ENCODE measurements at regions of chr18 and their contacts with region 1.

Region 1: GRCh38 chr18:62425465-62426195 is 97.2 kb upstream of the ZCCHC2 start:
- DNase-seq: peak; percentile 15 to 56 (median 51)
- H3K4me3 ChIP-seq: no peak overlapping the region
- H3K4me3 Mint-ChIP-seq: no peak overlapping the region
- H3K27ac ChIP-seq: no peak overlapping the region
- H3K27ac Mint-ChIP-seq: peak overlapping the region in 1 of 8 donors; percentile 10
- H3K4me1 ChIP-seq: peaks cover 10% of the 10 kb centered on the region
- H3K4me1 Mint-ChIP-seq: peaks cover 11 to 18% (median 17%) of the 10 kb centered on the region in 3 donors
- H3K27me3 ChIP-seq: no peaks in the 10 kb centered on the region
- H3K27me3 Mint-ChIP-seq: peaks cover 4 to 12% of the 10 kb centered on the region in 2 donors

Region 2: GRCh38 chr18:62379051-62379450 is 46.6 kb before region 1 on chr18:
- CTCF ChIA-PET with region 1: no interaction called
- POLR2A ChIA-PET with region 1: no interaction called
- DNase-seq: no peak
- H3K4me3 ChIP-seq: no peak overlapping the region
- H3K4me3 Mint-ChIP-seq: no peak overlapping the region
- H3K27ac ChIP-seq: no peak overlapping the region
- H3K27ac Mint-ChIP-seq: no peak overlapping the region
- H3K4me1 ChIP-seq: no peaks in the 10 kb centered on the region
- H3K4me1 Mint-ChIP-seq: no peaks in the 10 kb centered on the region
- H3K27me3 ChIP-seq: no peaks in the 10 kb centered on the region
- H3K27me3 Mint-ChIP-seq: peaks cover 6 to 9% of the 10 kb centered on the region in 2 donors

Region 3: DNA sequence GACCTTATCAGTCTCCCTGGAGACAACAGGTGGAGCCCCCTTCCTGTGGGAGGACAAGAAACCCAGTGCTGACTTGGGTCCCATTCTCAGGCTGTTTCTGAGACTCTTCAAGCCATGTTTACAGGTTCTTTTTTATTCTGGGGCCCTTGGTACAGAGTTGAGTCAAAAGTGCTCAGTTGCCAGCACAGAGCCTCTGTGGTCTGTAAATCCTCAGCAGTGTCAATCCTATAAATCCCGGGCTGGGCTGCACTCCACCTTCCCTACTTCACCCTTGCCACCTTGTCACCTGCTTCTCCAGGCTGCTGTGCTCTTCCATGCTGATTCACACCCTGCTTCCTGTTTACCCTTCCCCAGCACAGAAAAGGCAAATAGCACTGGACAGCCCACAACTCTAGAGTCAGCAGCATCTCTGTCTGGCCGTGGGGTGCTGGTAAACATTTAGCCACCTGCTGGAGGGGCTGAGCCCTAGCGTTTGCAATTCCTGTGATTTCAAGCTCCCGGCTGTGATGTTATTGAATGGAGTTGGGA is 25.8 kb before region 1 on chr18:
- CTCF ChIA-PET with region 1: no interaction called
- POLR2A ChIA-PET with region 1: no interaction called
- DNase-seq: no peak
- H3K4me3 ChIP-seq: no peak overlapping the region
- H3K4me3 Mint-ChIP-seq: no peak overlapping the region
- H3K27ac ChIP-seq: no peak overlapping the region
- H3K27ac Mint-ChIP-seq: peak overlapping the region in 1 of 8 donors; percentile 20
- H3K4me1 ChIP-seq: no peaks in the 10 kb centered on the region
- H3K4me1 Mint-ChIP-seq: no peaks in the 10 kb centered on the region
- H3K27me3 ChIP-seq: no peaks in the 10 kb centered on the region
- H3K27me3 Mint-ChIP-seq: peaks cover 2 to 3% of the 10 kb centered on the region in 2 donors

Region 4: DNA sequence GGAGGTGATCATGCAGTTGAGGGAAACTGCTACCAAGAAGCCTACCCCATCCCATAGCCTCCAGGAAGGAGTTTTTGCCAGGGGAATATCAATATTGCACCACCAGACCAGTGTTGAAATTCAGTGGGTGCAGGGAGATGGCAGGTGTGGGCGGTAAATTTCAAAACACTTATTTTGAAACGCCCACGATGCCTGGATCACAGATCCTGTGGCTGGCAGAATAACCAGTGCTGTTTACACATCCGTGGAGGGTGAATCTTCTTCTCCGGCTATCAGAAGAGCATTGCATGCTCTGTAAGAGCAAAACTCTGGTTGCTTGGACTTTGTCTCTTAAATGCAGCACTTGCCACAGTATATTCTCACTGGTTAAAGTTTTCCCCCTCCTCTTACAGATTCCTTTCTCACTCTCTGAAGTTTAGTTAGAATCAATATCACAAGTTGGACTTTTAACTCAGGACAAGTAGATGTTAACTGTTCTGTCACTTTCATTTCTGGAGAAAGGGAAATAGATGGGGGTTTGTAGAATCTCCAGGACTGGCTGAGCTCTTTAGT is 26.7 kb after region 1 on chr18:
- CTCF ChIA-PET with region 1: no interaction called
- POLR2A ChIA-PET with region 1: no interaction called
- DNase-seq: no peak
- H3K4me3 ChIP-seq: no peak overlapping the region
- H3K4me3 Mint-ChIP-seq: no peak overlapping the region
- H3K27ac ChIP-seq: no peak overlapping the region
- H3K27ac Mint-ChIP-seq: peak overlapping the region in 1 of 8 donors; percentile 36
- H3K4me1 ChIP-seq: no peaks in the 10 kb centered on the region
- H3K4me1 Mint-ChIP-seq: peaks cover 4 to 6% (median 5%) of the 10 kb centered on the region in 3 donors
- H3K27me3 ChIP-seq: peaks cover 4% of the 10 kb centered on the region
- H3K27me3 Mint-ChIP-seq: peaks cover 0 to 26% of the 10 kb centered on the region in 2 donors

Region 5: GRCh38 chr18:62584241-62585120 is 158.9 kb after region 1 on chr18:
- CTCF ChIA-PET with region 1: interaction called, 21 read pairs
- POLR2A ChIA-PET with region 1: no interaction called
- DNase-seq: peak; percentile 70 to 86 (median 80)
- H3K4me3 ChIP-seq: no peak overlapping the region
- H3K4me3 Mint-ChIP-seq: peak overlapping the region; percentile 0 to 63 (median 35)
- H3K27ac ChIP-seq: no peak overlapping the region
- H3K27ac Mint-ChIP-seq: peak overlapping the region; percentile 15 to 88 (median 64)
- H3K4me1 ChIP-seq: peaks cover 25% of the 10 kb centered on the region
- H3K4me1 Mint-ChIP-seq: peaks cover 34 to 42% (median 34%) of the 10 kb centered on the region in 3 donors
- H3K27me3 ChIP-seq: no peaks in the 10 kb centered on the region
- H3K27me3 Mint-ChIP-seq: no peaks in the 10 kb centered on the region

Region 6: GRCh38 chr18:62637807-62638687 is 212.4 kb after region 1 on chr18:
- CTCF ChIA-PET with region 1: no interaction called
- POLR2A ChIA-PET with region 1: no interaction called
- DNase-seq: peak; percentile 16 to 67 (median 29)
- H3K4me3 ChIP-seq: no peak overlapping the region
- H3K4me3 Mint-ChIP-seq: no peak overlapping the region
- H3K27ac ChIP-seq: no peak overlapping the region
- H3K27ac Mint-ChIP-seq: no peak overlapping the region
- H3K4me1 ChIP-seq: no peaks in the 10 kb centered on the region
- H3K4me1 Mint-ChIP-seq: no peaks in the 10 kb centered on the region
- H3K27me3 ChIP-seq: no peaks in the 10 kb centered on the region
- H3K27me3 Mint-ChIP-seq: peaks cover 3 to 42% of the 10 kb centered on the region in 2 donors

Measured in CD8-positive, alpha-beta memory T cell (primary cell).